Gastrocnemius medialis (tissue), 4 donors: ENCODE measurements at regions of chr9 and their contacts with region 1.

Region 1: GRCh38 chr9:125255781-125256391 is 5.7 kb upstream of the GAPVD1 start:
- DNase-seq: no peak
- ATAC-seq: peak in 1 of 2 donors; percentile 46
- H3K4me3 ChIP-seq: no peak overlapping the region
- H3K27ac ChIP-seq: no peak overlapping the region
- H3K4me1 ChIP-seq: peaks cover under 1 to 5% of the 10 kb centered on the region in 2 donors
- H3K27me3 ChIP-seq: no peaks in the 10 kb centered on the region
- CTCF ChIP-seq: peak in 2 of 5 experiments; percentile 26 to 43
- POLR2A ChIP-seq: no peak

Region 2: DNA sequence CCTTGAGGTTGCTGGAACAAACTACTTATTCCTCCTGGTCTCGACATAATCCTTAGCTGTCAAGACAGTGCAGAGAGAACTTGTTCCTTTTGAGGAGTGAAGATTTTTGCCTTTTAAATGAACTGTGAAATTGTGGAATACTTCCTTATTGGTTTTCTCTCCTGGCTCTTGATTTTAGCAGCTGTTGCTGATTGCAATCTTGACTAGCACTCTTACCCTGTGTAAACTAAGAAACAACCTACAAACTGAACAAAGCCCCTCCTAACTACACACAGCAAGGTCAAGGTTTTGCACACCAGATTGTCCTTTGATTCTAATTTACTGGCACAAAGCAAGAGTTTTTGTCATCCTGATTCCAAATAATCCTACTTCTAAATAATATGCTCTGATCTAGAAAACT is 231.0 kb before region 1 on chr9:
- in situ Hi-C with region 1: no loop called
- intact Hi-C with region 1: no loop called
- DNase-seq: no peak
- ATAC-seq: no peak
- H3K4me3 ChIP-seq: no peak overlapping the region
- H3K27ac ChIP-seq: no peak overlapping the region
- H3K4me1 ChIP-seq: no peaks in the 10 kb centered on the region
- H3K27me3 ChIP-seq: no peaks in the 10 kb centered on the region
- CTCF ChIP-seq: no peak
- POLR2A ChIP-seq: no peak

Region 3: DNA sequence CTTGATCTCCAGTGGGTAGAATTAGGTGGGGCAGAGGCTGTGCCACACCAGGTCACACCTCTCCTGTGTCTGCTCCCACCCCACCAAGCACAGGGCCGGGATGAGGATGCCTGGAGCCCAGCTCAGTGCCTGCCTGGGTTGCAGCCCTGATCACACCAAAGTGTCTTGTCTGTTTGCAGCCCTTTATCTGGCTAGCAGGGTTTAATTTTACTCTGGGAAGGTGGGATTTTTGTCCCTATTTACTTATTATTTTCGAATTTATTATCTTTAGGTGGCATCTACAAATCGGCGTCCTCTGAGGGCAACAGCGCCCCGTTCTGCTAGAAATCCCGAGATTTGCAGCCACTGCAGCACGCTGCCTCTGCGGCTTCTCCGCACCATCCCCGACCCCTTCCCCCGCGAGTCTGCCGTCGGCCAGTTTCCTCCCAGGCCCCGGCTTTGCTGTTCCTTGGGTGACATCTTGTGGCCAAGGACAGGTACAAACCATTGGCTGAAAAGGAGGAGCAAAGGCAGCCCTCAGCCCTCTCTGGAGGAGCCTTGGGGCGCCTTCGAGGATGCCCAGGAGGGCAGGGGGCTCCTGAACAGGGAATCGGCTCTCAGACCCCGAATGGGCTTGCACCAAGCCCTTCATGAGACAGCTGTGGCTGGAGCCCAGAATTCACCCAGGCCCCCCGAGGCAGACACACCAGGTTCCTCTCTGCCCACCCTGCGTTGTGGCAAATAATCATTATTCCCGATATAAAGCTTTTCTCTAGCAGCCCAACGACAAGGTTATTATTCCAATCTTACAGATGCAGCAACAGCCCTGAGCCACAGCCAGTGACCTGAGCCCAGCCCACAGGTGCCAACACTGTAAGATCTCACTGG is 118.8 kb after region 1 on chr9:
- in situ Hi-C with region 1: loop called in 1 of 4 experiments (anchors 10 kb)
- intact Hi-C with region 1: loop called (anchors 2 kb)
- DNase-seq: peak; percentile 31 to 40
- ATAC-seq: peak; percentile 81 to 83
- H3K4me3 ChIP-seq: peak overlapping the region in 3 of 4 donors; percentile 25 to 42 (median 31)
- H3K27ac ChIP-seq: no peak overlapping the region
- H3K4me1 ChIP-seq: peaks cover 0 to 5% of the 10 kb centered on the region in 2 donors
- H3K27me3 ChIP-seq: no peaks in the 10 kb centered on the region
- CTCF ChIP-seq: peak; percentile 45 to 79 (median 62)
- POLR2A ChIP-seq: no peak